ENCODE measurements at regions of chr3 and their contacts with region 1.

Region 1: DNA sequence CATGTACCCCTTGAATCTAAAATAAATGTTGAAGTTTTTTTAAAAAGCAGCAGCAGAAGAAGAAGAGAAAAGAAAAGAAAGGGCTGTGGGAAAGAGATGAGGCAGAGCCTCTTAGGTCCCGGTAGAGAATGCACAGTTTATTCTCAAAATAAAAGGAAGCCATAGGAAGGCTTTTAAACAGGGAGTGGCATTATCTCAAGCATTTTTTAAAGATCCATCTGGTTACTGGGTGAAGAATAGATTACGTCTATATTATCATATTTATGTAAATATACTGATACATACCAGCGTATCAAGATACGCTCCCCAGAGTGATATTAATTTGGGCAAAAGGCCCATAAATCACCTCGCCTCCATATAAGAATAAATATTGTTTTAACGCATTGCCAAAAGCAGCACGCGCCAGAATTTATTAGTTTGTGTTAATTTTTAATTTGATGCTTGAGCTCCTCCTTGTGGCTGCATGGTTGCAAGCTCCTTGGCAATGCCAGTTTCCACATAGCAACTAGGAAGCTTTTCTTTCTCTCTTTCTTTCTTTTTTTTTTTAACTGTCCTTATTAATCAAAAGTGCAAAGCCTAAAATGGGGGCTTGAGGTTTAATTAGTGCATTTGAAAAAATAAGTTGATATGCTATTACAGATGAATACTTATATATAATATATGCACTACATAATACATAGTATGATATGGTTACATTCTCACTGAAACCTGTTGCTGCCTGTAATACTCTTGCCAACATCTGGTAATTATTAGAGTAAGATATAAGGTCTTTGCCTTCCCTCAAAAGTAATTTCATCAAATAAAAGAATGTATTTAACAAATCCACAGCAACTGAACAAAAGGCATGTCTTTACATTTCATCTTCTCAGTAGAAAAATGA is 242.8 kb upstream of the UBE2E2 start:
- DNase-seq: peak in 3 of 5 donors; percentile 12 to 30 (median 27)
- ATAC-seq: peak in 2 of 4 donors; percentile 41 to 50
- H3K4me3 ChIP-seq: peak overlapping the region in 2 of 12 donors; percentile 28 to 29
- H3K27ac ChIP-seq: no peak overlapping the region
- H3K4me1 ChIP-seq: peaks cover 0 to 11% (median 0%) of the 10 kb centered on the region in 12 donors
- H3K27me3 ChIP-seq: no peaks in the 10 kb centered on the region
- CTCF ChIP-seq: peak; percentile 40 to 86 (median 66)
- POLR2A ChIP-seq: no peak

Region 2: DNA sequence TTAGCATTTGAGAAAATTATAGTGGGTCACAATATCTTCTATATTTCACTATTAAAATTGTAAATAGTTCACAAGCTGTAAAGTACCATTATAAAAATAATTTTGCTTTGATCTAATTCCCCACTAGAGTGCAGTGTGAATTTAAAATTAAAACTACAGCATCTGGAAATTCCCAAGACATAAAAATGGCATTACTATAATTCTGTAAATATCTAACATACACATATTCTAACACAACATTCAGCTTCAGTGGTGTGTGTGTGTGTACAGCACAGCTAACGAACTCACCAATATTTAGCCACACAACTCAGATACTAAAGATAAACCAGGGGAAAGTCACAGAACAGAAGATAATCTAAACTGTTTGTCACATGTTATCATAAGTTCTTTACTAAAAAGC is 784.4 kb before region 1 on chr3:
- intact Hi-C with region 1: loop called in 2 of 10 experiments (anchors 10 kb)
- DNase-seq: no peak
- ATAC-seq: no peak
- H3K4me3 ChIP-seq: no peak overlapping the region
- H3K27ac ChIP-seq: no peak overlapping the region
- H3K4me1 ChIP-seq: no peaks in the 10 kb centered on the region
- H3K27me3 ChIP-seq: no peaks in the 10 kb centered on the region
- CTCF ChIP-seq: peak in 5 of 12 donors; percentile 19 to 34 (median 31)
- POLR2A ChIP-seq: no peak

Region 3: DNA sequence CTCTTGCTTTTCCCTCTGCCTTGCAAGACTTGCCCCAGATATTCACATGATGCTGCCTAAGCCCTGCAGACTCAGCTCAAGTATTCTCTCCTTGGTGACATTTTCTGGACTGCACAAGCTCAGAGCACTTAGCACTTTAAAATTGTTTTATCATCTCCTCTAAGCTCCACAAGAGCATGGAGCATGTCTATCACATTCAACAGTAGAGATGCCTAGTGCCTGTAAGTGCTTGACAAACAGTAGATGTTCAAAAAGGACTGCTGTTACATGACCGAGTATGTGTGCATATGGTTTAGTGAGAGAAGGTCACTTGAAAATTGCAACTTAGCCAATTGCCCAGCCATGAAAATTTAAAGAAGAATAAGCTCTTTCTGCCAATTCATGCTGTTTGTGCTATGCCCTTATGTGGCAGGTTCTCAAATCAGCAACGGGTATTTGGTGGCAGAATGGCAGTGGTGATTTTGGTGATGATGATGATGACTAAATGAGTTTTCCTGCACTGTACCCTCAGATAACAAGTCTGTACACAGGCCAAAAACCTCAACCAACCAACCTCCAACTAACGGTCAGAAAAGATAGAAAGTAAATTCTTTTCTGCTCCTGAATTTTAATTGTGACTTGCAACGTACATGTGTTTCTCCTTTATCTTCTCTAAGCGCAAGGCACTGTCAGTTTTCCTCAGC is 404.5 kb before region 1 on chr3:
- intact Hi-C with region 1: loop called in 5 of 10 experiments (anchors 5 kb)
- DNase-seq: no peak
- ATAC-seq: no peak
- H3K4me3 ChIP-seq: no peak overlapping the region
- H3K27ac ChIP-seq: no peak overlapping the region
- H3K4me1 ChIP-seq: no peaks in the 10 kb centered on the region
- H3K27me3 ChIP-seq: no peaks in the 10 kb centered on the region
- CTCF ChIP-seq: no peak
- POLR2A ChIP-seq: no peak

Region 4: DNA sequence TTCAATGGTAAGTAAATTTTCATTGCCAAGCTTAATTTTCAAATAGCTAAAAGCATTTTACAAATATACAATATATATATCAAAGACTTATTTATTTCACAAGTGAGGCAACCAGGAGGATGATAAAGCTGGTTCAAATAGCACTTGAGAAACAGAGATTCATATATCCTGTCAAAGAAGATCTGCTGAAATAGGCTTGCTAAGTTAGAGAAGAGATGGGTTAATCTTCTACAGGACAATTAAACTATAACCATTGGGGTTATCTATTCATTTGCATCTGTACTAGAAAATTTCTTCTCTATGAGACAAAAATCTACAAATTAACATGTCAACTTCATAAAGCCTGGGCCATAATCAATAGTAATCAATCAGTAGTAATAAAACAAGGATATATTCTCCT is 395.0 kb before region 1 on chr3:
- intact Hi-C with region 1: loop called (anchors 2 to 5 kb)
- DNase-seq: no peak
- ATAC-seq: no peak
- H3K4me3 ChIP-seq: no peak overlapping the region
- H3K27ac ChIP-seq: no peak overlapping the region
- H3K4me1 ChIP-seq: no peaks in the 10 kb centered on the region
- H3K27me3 ChIP-seq: no peaks in the 10 kb centered on the region
- CTCF ChIP-seq: no peak
- POLR2A ChIP-seq: no peak

Region 5: DNA sequence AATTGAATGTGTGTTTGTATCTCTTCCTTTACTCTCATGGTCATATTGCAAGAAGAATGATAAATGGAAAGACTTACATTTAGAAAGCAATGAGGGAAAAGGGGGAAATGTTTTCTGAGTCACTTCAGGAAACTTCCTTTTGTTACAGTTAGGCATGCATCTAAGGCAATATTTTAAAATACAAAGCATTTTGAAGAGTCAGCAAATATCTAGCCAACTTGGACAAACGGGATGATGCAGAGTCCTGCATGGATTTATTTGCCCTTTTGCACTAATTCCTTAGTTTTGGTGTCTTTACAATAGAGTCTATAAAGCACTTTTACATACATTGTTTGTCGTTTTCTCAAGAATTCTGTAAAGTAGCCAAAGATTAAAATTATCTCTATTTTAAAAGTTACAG is 43.4 kb before region 1 on chr3:
- intact Hi-C with region 1: no loop called
- DNase-seq: no peak
- ATAC-seq: no peak
- H3K4me3 ChIP-seq: no peak overlapping the region
- H3K27ac ChIP-seq: no peak overlapping the region
- H3K4me1 ChIP-seq: no peaks in the 10 kb centered on the region
- H3K27me3 ChIP-seq: no peaks in the 10 kb centered on the region
- CTCF ChIP-seq: no peak
- POLR2A ChIP-seq: no peak

Region 6: GRCh38 chr3:22928216-22929110 is 31.9 kb before region 1 on chr3:
- intact Hi-C with region 1: loop called in 1 of 10 experiments (anchors 5 kb)
- DNase-seq: peak in 1 of 5 donors; percentile 30
- ATAC-seq: peak in 2 of 4 donors; percentile 34
- H3K4me3 ChIP-seq: no peak overlapping the region
- H3K27ac ChIP-seq: peak overlapping the region in 10 of 12 donors; percentile 0 to 57 (median 22)
- H3K4me1 ChIP-seq: peaks cover 0 to 12% (median 0%) of the 10 kb centered on the region in 12 donors
- H3K27me3 ChIP-seq: no peaks in the 10 kb centered on the region
- CTCF ChIP-seq: no peak
- POLR2A ChIP-seq: no peak

Region 7: GRCh38 chr3:23648326-23648995 is 688.1 kb after region 1 on chr3:
- intact Hi-C with region 1: no loop called
- DNase-seq: no peak
- ATAC-seq: peak; percentile 64 to 80 (median 78)
- H3K4me3 ChIP-seq: no peak overlapping the region
- H3K27ac ChIP-seq: no peak overlapping the region
- H3K4me1 ChIP-seq: peaks cover 0 to 21% (median 2%) of the 10 kb centered on the region in 12 donors
- H3K27me3 ChIP-seq: no peaks in the 10 kb centered on the region
- CTCF ChIP-seq: peak in 2 of 12 donors; percentile 19 to 31
- POLR2A ChIP-seq: no peak